HCT116 (cell line): ENCODE measurements at regions of chr10 and their contacts with region 1.

Region 1: DNA sequence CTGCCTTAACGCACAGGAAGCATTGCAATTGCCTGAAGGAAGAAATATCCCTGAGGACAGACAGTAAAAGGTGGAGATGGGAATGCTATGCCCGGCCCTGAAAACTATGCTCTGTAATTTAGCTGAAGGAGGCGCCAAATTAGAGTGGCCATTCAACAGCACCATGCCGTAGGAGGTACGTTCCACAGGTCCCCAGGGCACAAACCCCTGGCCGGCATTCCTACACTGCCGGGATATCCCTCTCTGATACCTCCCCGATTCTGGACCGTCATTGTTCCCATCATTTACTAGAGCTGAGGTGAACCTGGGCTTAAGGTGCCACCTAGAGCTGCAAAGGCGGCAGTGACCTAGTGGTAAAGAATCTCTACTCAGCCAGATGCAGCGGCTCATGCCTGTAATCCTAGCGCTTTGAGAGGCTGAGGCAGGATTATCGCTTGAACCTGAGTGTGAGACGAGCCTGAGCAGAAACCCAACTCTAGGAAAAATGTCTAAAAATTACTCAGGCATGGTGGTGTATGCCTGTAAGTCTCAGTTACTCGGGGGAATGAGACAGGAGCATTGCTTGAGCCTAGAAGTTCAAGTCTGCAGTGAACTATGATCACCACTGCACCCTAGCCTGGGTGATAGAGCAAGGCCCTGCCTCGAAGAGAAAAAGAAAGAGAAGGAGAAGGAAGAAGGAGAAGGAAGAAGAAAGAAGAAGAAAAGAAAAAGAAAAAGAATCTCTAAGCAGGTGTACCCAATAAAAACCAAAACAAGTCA is 53.0 kb upstream of the TNKS2 start:
- DNase-seq: peak; percentile 67
- ATAC-seq: peak; percentile 99
- H3K4me3 ChIP-seq: peak overlapping the region; percentile 31 to 36
- H3K27ac ChIP-seq: no peak overlapping the region
- H3K4me1 ChIP-seq: peaks cover 0 to 10% of the 10 kb centered on the region in 2 experiments; a peak in 1 of 4 replicates
- H3K27me3 ChIP-seq: no peaks in the 10 kb centered on the region
- CTCF ChIP-seq: peak; percentile 65 to 84 (median 72); a peak in 5 of 6 replicates
- POLR2A ChIP-seq: no peak
- RAD21 ChIP-seq: peak; percentile 93

Region 2: GRCh38 chr10:90912174-90912573 is 833.1 kb before region 1 on chr10:
- CTCF ChIA-PET with region 1: interaction called, 6 read pairs
- POLR2A ChIA-PET with region 1: no interaction called
- RAD21 ChIA-PET with region 1: no interaction called
- intact Hi-C with region 1: loop called (anchors 2 kb)
- DNase-seq: no peak
- ATAC-seq: no peak
- H3K4me3 ChIP-seq: no peak overlapping the region
- H3K27ac ChIP-seq: no peak overlapping the region
- H3K4me1 ChIP-seq: peaks cover 0 to 2% of the 10 kb centered on the region in 2 experiments; a peak in 1 of 4 replicates
- H3K27me3 ChIP-seq: no peaks in the 10 kb centered on the region
- CTCF ChIP-seq: no peak
- POLR2A ChIP-seq: no peak
- RAD21 ChIP-seq: no peak

Region 3: DNA sequence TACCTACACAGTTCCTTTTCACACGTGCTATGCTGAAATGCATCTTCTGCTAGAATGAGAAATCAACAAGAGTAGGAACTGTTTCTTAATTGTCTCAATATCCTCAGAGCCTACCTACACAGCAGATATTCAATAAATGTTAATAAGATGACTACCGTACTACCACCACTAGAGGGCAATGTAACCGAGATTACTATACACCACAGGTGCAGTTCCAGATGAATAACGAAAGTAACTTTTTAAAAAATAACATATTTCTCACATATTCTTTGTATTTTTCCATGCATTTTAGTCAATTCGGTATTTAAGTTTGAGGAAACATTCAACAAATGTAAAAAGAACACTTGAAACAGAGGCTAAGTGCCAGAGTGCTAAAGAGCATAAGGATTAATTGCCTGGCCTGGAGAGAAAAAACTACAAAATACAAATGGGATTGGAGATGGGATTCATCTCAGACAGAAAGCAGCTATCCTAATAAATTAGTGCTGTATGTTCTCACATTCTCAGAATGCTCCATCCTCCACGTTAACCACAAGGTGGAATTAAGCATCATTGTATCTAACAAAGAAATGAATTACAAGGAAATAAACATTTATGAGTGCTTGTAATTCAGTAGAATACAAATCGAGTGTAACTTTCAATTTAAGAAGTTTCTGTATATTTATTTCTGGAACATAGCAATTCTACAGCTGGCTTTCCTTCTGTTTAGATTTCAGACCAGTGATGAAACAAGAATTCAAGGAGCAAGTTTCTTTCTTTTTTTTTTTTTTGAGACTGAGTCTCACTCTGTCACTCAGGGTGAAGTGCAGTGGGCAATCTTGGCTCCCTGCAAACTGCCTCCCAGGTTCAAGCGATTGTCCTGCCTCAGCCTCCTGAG is 355.4 kb before region 1 on chr10:
- CTCF ChIA-PET with region 1: interaction called, 5 read pairs
- POLR2A ChIA-PET with region 1: no interaction called
- RAD21 ChIA-PET with region 1: no interaction called
- intact Hi-C with region 1: loop called (anchors 1 kb)
- DNase-seq: peak; percentile 37
- ATAC-seq: peak; percentile 84
- H3K4me3 ChIP-seq: peak overlapping the region in 1 of 2 experiments; percentile 12; a peak in 1 of 4 replicates
- H3K27ac ChIP-seq: no peak overlapping the region
- H3K4me1 ChIP-seq: peaks cover 0 to 3% of the 10 kb centered on the region in 2 experiments; a peak in 1 of 4 replicates
- H3K27me3 ChIP-seq: peaks cover 21% of the 10 kb centered on the region
- CTCF ChIP-seq: peak; percentile 44 to 65 (median 65); a peak in 5 of 6 replicates
- POLR2A ChIP-seq: no peak
- RAD21 ChIP-seq: peak; percentile 65

Region 4: DNA sequence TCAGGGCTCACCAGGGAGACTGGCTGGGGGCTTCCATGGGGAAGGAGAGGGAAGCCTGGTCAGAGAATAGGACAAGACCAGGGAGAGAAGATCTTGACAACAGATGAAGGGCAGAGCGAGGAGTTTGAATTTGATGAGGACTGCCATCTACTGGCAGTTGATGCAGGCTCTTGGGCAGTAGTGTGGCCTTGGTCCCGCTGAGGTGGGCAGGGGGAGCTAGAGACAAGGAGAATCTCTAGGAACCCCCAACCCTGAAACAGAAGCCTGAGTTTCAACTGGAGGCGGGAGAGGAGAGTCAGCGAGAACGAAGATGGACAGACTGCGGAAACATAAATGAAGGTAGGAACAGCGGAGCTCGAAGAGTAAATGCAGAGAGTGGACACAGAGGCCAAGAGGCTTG is 193.4 kb before region 1 on chr10:
- CTCF ChIA-PET with region 1: interaction called, 7 read pairs
- POLR2A ChIA-PET with region 1: no interaction called
- RAD21 ChIA-PET with region 1: no interaction called
- intact Hi-C with region 1: loop called (anchors 1 kb)
- DNase-seq: peak; percentile 16
- ATAC-seq: peak; percentile 84
- H3K4me3 ChIP-seq: no peak overlapping the region
- H3K27ac ChIP-seq: no peak overlapping the region
- H3K4me1 ChIP-seq: no peaks in the 10 kb centered on the region
- H3K27me3 ChIP-seq: no peaks in the 10 kb centered on the region
- CTCF ChIP-seq: peak; percentile 62 to 97 (median 71)
- POLR2A ChIP-seq: no peak
- RAD21 ChIP-seq: peak; percentile 84